ENCODE measurements at regions of chr1 and their contacts with region 1.

Region 1: GRCh38 chr1:198275597-198275996 is 118.8 kb downstream of the NEK7 start:
- DNase-seq: no peak
- ATAC-seq: no peak
- H3K4me3 Mint-ChIP-seq: no peak overlapping the region
- H3K27ac Mint-ChIP-seq: no peak overlapping the region
- H3K4me1 Mint-ChIP-seq: peaks cover 1% of the 10 kb centered on the region
- H3K27me3 Mint-ChIP-seq: no peaks in the 10 kb centered on the region
- CTCF ChIP-seq: no peak

Region 2: DNA sequence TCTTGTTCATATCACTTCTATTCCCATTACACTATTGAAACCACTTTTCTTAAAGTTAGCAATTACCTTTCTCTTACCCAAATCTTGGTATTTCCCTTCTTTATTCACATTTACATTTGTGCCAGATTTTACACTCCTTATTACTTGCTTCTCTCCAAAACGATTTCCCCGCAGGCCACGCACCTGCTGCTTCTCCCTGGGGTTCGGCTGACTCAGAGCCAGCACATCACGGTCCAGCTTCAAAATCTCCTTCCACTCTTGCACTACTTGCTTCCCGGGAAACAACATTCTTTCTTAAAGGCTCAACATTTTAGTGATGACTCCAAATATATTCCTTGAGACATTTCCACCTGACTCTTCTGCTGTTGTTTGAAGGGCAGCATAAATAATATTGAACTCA is 337.7 kb before region 1 on chr1:
- CTCF ChIA-PET with region 1: no interaction called
- POLR2A ChIA-PET with region 1: no interaction called
- intact Hi-C with region 1: loop called (anchors 10 kb)
- DNase-seq: no peak
- ATAC-seq: no peak
- H3K4me3 Mint-ChIP-seq: no peak overlapping the region
- H3K27ac Mint-ChIP-seq: no peak overlapping the region
- H3K4me1 Mint-ChIP-seq: no peaks in the 10 kb centered on the region
- H3K27me3 Mint-ChIP-seq: peaks cover 15% of the 10 kb centered on the region
- CTCF ChIP-seq: no peak

Region 3: DNA sequence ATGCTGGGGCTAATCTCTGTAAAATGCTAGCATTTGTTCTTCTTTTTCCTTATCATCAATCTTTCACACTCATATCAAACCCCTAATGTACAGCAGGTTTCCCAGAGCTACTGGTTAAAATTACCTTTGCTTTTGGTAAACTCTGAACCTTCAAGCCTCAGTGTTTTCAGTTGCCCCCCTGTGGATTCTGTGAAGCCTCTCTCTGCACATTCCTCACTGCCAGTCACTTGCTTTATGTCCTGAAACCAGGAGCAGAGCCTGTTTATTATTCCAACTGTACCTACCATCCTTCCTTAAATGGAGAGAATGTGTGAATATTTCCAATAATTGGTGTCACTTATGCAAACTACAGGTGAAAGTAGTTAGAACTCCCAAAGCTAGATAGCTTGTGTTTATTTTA is 15.4 kb after region 1 on chr1:
- CTCF ChIA-PET with region 1: no interaction called
- POLR2A ChIA-PET with region 1: no interaction called
- intact Hi-C with region 1: no loop called
- DNase-seq: no peak
- ATAC-seq: no peak
- H3K4me3 Mint-ChIP-seq: no peak overlapping the region
- H3K27ac Mint-ChIP-seq: no peak overlapping the region
- H3K4me1 Mint-ChIP-seq: no peaks in the 10 kb centered on the region
- H3K27me3 Mint-ChIP-seq: no peaks in the 10 kb centered on the region
- CTCF ChIP-seq: no peak

Measured in activated B cell treated with CpG ODN at 0.5 μM for 24 hours (primary cell).